ENCODE measurements at regions of chr2 and their contacts with region 1.

Region 1: DNA sequence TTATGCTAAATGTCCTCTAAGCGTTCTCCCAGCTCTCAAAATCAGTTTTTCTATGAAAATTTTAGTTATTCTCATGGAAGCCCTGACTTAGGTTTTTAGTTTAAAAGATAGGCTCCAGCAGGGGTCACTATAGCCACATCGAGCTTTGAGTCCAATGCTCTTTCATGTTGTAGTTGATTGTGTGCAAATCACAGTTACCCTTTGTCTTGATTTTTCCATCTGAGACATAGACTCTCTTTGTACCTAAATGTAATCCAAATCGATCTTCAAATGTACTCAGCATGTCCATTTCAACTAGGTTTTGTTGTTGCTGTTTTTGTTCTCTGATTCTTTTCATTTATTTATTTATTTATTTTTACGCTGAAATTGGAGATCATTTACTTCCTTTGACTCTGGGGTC is 26.4 kb upstream of the MSTN start:
- DNase-seq: peak; percentile 72
- ATAC-seq: peak; percentile 84
- H3K4me3 ChIP-seq: no peak overlapping the region
- H3K27ac ChIP-seq: no peak overlapping the region
- H3K4me1 ChIP-seq: no peaks in the 10 kb centered on the region
- H3K27me3 ChIP-seq: no peaks in the 10 kb centered on the region
- CTCF ChIP-seq: peak; percentile 63 to 86 (median 78); a peak in 5 of 6 replicates
- POLR2A ChIP-seq: no peak
- RAD21 ChIP-seq: peak; percentile 85

Region 2: DNA sequence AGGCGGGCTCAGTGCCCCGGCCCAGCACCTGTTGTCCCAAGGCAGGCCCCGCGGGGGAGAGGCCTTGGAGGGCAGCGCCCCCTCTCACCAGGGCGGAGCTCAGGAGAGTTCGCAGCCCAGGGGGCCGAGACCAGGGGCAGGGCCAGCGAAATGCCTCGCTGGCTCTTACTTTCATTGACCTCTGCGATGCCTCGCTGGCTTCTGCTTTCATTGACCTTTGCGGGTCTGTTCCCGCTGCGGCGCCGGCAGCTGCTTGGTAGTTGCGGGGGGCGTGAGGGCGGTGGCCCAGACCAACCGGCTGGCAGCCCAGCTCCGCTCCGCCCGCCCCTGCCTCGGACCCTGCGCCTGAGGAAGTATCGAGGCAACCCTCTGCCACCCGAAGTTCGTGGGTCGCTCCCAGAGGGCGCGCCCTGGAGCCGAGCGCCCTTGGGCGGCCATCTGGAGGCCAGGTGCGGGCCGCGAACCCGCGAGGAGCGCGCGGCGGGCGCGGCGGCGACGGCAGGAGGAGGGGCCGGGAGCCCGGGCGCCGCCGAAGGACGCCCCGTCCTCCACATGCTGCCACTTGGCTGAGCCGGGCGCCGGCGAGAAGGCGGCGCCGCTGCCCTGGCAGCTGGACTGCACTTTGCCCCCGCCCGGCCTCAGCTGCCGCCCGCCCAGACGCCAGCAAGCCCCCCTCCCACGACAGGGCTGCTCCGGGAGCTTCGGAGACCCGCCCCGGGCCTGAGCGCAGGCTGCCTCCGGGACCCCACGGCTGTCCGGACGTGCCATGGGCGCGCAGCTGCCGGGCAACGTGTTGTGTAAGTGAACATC is 91.6 kb after region 1 on chr2:
- CTCF ChIA-PET with region 1: interaction called, 5 read pairs
- POLR2A ChIA-PET with region 1: no interaction called
- RAD21 ChIA-PET with region 1: interaction called in 1 of 2 experiments, 3 read pairs
- intact Hi-C with region 1: loop called (anchors 2 kb)
- DNase-seq: peak; percentile 44
- ATAC-seq: peak; percentile 91
- H3K4me3 ChIP-seq: peak overlapping the region; percentile 54 to 65
- H3K27ac ChIP-seq: peak overlapping the region; percentile 28; the same call in 1 of the 2 replicates
- H3K4me1 ChIP-seq: peaks cover 4 to 16% of the 10 kb centered on the region in 2 experiments; a peak in 3 of 4 replicates
- H3K27me3 ChIP-seq: no peaks in the 10 kb centered on the region
- CTCF ChIP-seq: peak; percentile 63 to 77 (median 76); a peak in 5 of 6 replicates
- POLR2A ChIP-seq: no peak
- RAD21 ChIP-seq: no peak

Region 3: GRCh38 chr2:190277234-190278112 is 188.6 kb after region 1 on chr2:
- CTCF ChIA-PET with region 1: interaction called, 9 read pairs
- POLR2A ChIA-PET with region 1: no interaction called
- RAD21 ChIA-PET with region 1: no interaction called
- intact Hi-C with region 1: loop called (anchors 1 kb)
- DNase-seq: peak; percentile 56
- ATAC-seq: peak; percentile 93
- H3K4me3 ChIP-seq: no peak overlapping the region
- H3K27ac ChIP-seq: no peak overlapping the region
- H3K4me1 ChIP-seq: peaks cover 2 to 11% of the 10 kb centered on the region in 2 experiments; a peak in 3 of 4 replicates
- H3K27me3 ChIP-seq: no peaks in the 10 kb centered on the region
- CTCF ChIP-seq: peak; percentile 39 to 65 (median 50); a peak in 5 of 6 replicates
- POLR2A ChIP-seq: no peak
- RAD21 ChIP-seq: peak; percentile 71

Region 4: GRCh38 chr2:190313880-190314279 is 225.0 kb after region 1 on chr2:
- CTCF ChIA-PET with region 1: interaction called, 9 read pairs
- POLR2A ChIA-PET with region 1: no interaction called
- RAD21 ChIA-PET with region 1: no interaction called
- intact Hi-C with region 1: loop called (anchors 1 kb)
- DNase-seq: no peak
- ATAC-seq: no peak
- H3K4me3 ChIP-seq: no peak overlapping the region
- H3K27ac ChIP-seq: no peak overlapping the region
- H3K4me1 ChIP-seq: peaks cover 22 to 26% of the 10 kb centered on the region in 2 experiments
- H3K27me3 ChIP-seq: no peaks in the 10 kb centered on the region
- CTCF ChIP-seq: no peak
- POLR2A ChIP-seq: no peak
- RAD21 ChIP-seq: no peak

Region 5: DNA sequence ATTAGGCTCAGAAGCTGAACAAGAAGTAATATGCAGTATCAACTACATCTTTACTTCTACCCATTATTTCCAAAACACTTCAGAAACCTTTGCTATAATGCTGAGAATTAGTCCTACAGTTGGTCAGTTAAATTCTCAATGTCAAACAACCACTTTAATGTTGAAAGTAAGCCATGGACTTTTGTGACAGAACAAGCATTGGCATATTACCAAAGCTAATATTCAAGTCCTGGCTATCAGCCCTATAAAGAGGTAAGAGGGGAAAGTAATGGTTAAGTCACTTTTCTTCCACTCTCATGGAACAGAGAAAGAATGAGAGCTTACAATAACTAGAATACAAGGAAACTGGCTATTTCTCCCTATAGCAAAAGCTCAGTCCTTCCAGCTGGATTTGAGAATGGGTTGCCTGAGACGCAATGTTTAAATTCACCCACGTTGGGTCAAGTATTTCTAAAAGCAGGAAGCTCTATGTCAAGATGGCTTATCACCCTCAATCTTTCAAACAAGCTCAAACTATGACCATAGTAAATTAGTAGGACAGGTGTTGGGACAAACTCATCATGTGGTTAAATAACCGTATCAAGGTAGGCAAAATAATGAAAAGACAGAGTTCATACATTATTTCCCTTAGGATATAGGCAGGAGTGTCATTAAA is 287.8 kb after region 1 on chr2:
- CTCF ChIA-PET with region 1: no interaction called
- POLR2A ChIA-PET with region 1: no interaction called
- RAD21 ChIA-PET with region 1: no interaction called
- intact Hi-C with region 1: loop called (anchors 1 kb)
- DNase-seq: no peak
- ATAC-seq: no peak
- H3K4me3 ChIP-seq: no peak overlapping the region
- H3K27ac ChIP-seq: no peak overlapping the region
- H3K4me1 ChIP-seq: no peaks in the 10 kb centered on the region
- H3K27me3 ChIP-seq: no peaks in the 10 kb centered on the region
- CTCF ChIP-seq: no peak
- POLR2A ChIP-seq: no peak
- RAD21 ChIP-seq: no peak

Region 6: GRCh38 chr2:190497428-190497827 is 408.5 kb after region 1 on chr2:
- CTCF ChIA-PET with region 1: no interaction called
- POLR2A ChIA-PET with region 1: no interaction called
- RAD21 ChIA-PET with region 1: no interaction called
- intact Hi-C with region 1: no loop called
- DNase-seq: no peak
- ATAC-seq: no peak
- H3K4me3 ChIP-seq: no peak overlapping the region
- H3K27ac ChIP-seq: no peak overlapping the region
- H3K4me1 ChIP-seq: peaks cover 0 to 5% of the 10 kb centered on the region in 2 experiments; a peak in 1 of 4 replicates
- H3K27me3 ChIP-seq: no peaks in the 10 kb centered on the region
- CTCF ChIP-seq: no peak
- POLR2A ChIP-seq: no peak
- RAD21 ChIP-seq: no peak

Region 7: DNA sequence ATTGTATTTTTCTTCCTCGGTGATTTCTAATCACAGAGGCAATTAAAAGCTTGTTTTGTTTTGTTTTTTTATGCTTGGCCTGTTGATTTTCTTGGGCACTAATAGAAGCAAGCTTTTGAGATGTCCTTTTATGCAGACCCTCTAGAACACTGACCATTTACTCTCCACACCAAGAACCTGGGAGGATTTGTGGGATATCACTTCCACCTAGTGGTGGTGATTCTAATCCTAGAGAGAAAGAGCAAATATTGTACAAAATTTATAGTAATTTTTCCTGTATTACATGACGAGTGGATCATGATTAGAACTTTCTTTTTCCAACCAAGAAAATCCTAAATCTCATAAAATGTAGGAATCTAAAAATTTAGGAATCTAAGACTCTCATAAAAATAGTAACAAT is 422.2 kb after region 1 on chr2:
- CTCF ChIA-PET with region 1: interaction called, 7 read pairs
- POLR2A ChIA-PET with region 1: no interaction called
- RAD21 ChIA-PET with region 1: no interaction called
- intact Hi-C with region 1: loop called (anchors 2 kb)
- DNase-seq: peak; percentile 3
- ATAC-seq: no peak
- H3K4me3 ChIP-seq: no peak overlapping the region
- H3K27ac ChIP-seq: no peak overlapping the region
- H3K4me1 ChIP-seq: no peaks in the 10 kb centered on the region
- H3K27me3 ChIP-seq: no peaks in the 10 kb centered on the region
- CTCF ChIP-seq: peak; percentile 31 to 71 (median 55); a peak in 5 of 6 replicates
- POLR2A ChIP-seq: no peak
- RAD21 ChIP-seq: peak; percentile 83

Region 8: DNA sequence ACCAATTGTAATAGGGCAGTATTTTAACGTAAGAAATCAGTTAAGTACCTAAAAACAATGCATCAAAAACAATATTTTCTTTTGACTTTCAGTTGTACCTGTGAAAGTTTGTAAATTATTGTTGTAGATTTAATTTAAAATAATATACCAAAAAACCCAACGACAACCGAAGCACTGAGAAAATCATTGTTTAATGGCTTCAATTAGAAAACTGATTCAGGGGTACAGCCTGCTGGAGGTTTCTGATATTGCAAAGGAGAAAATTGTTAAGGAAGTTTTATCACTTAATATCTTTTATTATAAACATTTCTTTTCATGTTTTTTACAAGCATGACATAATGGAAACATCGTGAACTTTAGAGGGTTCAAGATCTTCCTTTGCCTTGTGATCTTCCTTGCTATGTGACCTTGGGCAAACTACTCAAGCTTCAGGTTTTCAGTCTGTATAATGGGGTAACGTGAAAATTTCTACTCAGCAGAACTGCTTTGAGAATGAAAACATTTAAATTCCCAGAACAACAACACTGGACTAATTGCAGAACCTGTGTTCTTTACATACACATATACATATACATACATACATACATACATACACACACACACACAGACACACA is 715.4 kb after region 1 on chr2:
- CTCF ChIA-PET with region 1: no interaction called
- POLR2A ChIA-PET with region 1: no interaction called
- RAD21 ChIA-PET with region 1: no interaction called
- intact Hi-C with region 1: loop called (anchors 5 kb)
- DNase-seq: peak; percentile 16
- ATAC-seq: no peak; the same call in 1 of the 2 replicates
- H3K4me3 ChIP-seq: no peak overlapping the region
- H3K27ac ChIP-seq: no peak overlapping the region
- H3K4me1 ChIP-seq: no peaks in the 10 kb centered on the region
- H3K27me3 ChIP-seq: no peaks in the 10 kb centered on the region
- CTCF ChIP-seq: peak; percentile 35 to 58 (median 58); a peak in 5 of 6 replicates
- POLR2A ChIP-seq: no peak
- RAD21 ChIP-seq: peak; percentile 72